CD4-positive, alpha-beta memory T cell (primary cell): ENCODE measurements at regions of chr1 and their contacts with region 1.

Region 1: GRCh38 chr1:231091831-231092301 is 51.8 kb upstream of the FAM89A start:
- DNase-seq: peak in 4 of 5 donors; percentile 10 to 27 (median 22)
- H3K4me3 ChIP-seq: no peak overlapping the region
- H3K4me3 Mint-ChIP-seq: no peak overlapping the region
- H3K27ac ChIP-seq: no peak overlapping the region
- H3K27ac Mint-ChIP-seq: no peak overlapping the region
- H3K4me1 ChIP-seq: no peaks in the 10 kb centered on the region
- H3K4me1 Mint-ChIP-seq: peaks cover 0 to 4% (median 0%) of the 10 kb centered on the region in 4 donors
- H3K27me3 ChIP-seq: no peaks in the 10 kb centered on the region
- H3K27me3 Mint-ChIP-seq: peaks cover 17 to 24% of the 10 kb centered on the region in 2 donors

Region 2: DNA sequence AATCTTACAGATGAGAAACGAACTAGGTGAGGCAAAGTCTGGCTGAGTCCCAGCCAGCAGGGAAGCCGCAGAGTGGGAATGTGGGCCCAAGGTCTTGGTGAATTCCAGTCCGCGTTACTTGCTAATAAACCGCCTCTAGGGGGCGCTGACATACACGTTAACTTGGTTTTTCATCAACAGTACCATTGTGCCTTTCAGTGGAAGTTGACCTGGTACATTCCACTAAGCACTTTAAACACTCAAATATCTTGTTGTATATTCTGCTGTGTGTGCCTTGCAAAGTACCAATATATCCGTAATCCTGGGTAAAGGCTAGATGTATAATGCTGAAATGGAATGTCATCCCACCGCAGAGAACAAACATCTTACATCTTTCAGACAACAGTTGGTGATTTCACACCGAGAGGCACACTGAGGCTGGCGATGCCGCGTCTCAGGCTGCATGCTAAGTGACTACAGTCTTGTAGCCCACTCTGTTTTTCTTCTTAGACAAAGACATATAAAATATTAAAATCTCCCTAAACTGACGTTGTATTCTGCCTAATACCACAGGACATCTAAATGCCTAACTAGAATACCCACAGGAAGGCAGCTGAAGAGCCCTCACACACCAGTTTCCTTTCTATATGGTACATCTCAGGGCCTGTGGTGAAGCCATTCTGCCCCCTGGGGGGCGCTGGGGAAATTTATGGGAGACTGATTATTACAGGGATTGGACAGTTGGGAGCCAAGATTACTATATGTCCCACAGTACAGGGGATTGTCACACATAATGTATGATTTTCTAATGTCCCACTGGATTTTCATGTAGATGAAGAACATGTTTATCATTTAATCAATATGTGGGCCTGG is 174.4 kb before region 1 on chr1:
- CTCF ChIA-PET with region 1: interaction called, 17 read pairs
- POLR2A ChIA-PET with region 1: no interaction called
- intact Hi-C with region 1: loop called (anchors 1 kb)
- DNase-seq: peak; percentile 67 to 74 (median 69)
- H3K4me3 ChIP-seq: no peak overlapping the region
- H3K4me3 Mint-ChIP-seq: no peak overlapping the region
- H3K27ac ChIP-seq: no peak overlapping the region
- H3K27ac Mint-ChIP-seq: peak overlapping the region in 2 of 7 donors; percentile 43 to 61
- H3K4me1 ChIP-seq: no peaks in the 10 kb centered on the region
- H3K4me1 Mint-ChIP-seq: peaks cover 0 to 2% (median 0%) of the 10 kb centered on the region in 4 donors
- H3K27me3 ChIP-seq: no peaks in the 10 kb centered on the region
- H3K27me3 Mint-ChIP-seq: no peaks in the 10 kb centered on the region

Region 3: DNA sequence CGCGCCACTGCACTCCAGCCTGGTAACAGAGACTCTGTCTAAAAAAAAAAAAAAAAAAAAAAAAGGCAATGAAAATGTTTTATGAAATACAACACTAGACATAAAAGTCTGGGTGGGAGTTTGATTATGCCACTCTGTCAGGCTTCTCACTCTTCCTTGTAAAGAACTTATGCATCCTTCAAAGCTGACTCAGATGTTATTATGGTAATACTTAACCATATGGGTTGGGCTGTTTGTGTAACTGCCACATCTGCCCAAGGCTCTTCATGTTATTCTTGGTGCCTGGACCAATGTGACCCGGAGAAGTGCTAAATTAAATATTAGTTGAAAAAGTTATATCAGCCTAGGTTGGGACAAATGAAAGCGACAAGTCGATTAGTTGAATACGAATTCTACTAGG is 75.6 kb before region 1 on chr1:
- CTCF ChIA-PET with region 1: interaction called, 3 read pairs
- POLR2A ChIA-PET with region 1: no interaction called
- intact Hi-C with region 1: loop called (anchors 10 kb)
- DNase-seq: no peak
- H3K4me3 ChIP-seq: no peak overlapping the region
- H3K4me3 Mint-ChIP-seq: no peak overlapping the region
- H3K27ac ChIP-seq: no peak overlapping the region
- H3K27ac Mint-ChIP-seq: no peak overlapping the region
- H3K4me1 ChIP-seq: no peaks in the 10 kb centered on the region
- H3K4me1 Mint-ChIP-seq: peaks cover 0 to 6% (median 2%) of the 10 kb centered on the region in 4 donors
- H3K27me3 ChIP-seq: no peaks in the 10 kb centered on the region
- H3K27me3 Mint-ChIP-seq: no peaks in the 10 kb centered on the region